Gastrocnemius medialis (tissue), 4 donors: ENCODE measurements at regions of chr4 and their contacts with region 1.

Region 1: GRCh38 chr4:51842554-51843308 is at the start of gene DCUN1D4:
- DNase-seq: peak; percentile 100
- ATAC-seq: peak; percentile 76 to 78
- H3K4me3 ChIP-seq: peak within 1 kb of the TSS; percentile 70 to 96 (median 80)
- H3K27ac ChIP-seq: peak within 1 kb of the TSS; percentile 91 to 98 (median 94)
- H3K4me1 ChIP-seq: peaks cover 15% of the 10 kb centered on the region in 2 donors
- H3K27me3 ChIP-seq: no peaks in the 10 kb centered on the region
- CTCF ChIP-seq: peak in 3 of 5 experiments; percentile 51 to 59 (median 59)
- POLR2A ChIP-seq: peak; percentile 89 to 91
- total RNA-seq, gene DCUN1D4: 13.6 to 23.7 (median 18.4) TPM

Region 2: DNA sequence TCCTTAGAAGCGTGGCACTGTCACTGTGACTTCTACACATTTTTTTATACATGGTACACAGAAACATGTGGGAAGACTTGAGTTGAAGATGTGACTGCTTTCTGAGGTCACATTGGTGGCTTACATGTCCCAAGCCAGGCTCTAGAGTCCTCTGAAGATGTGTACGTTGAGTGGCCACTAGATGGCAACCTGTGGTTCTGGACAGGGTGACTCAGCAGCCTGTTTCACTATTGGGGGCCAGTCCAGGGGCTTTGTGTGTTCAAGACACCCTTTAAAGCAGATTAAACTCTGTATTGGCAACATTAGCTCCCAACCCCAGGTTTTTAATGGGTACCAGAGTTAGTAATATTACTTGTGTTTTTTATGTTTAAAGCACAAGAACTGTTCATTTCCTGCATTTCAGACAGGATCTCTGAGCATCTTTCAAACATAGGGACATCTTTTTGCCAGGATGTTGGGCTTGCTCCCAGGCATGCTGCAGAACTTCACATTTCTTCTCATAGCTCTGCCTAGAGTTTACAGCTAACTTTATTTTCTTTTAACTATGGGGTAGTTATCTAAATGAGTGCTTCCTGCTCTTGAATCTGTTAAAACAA is 53.2 kb after region 1 on chr4:
- in situ Hi-C with region 1: no loop called
- intact Hi-C with region 1: loop called (anchors 1 kb)
- DNase-seq: peak; percentile 41 to 76
- ATAC-seq: peak; percentile 86 to 99
- H3K4me3 ChIP-seq: no peak overlapping the region
- H3K27ac ChIP-seq: peak overlapping the region; percentile 49 to 70 (median 62)
- H3K4me1 ChIP-seq: peaks cover 12 to 20% of the 10 kb centered on the region in 2 donors
- H3K27me3 ChIP-seq: no peaks in the 10 kb centered on the region
- CTCF ChIP-seq: peak; percentile 54 to 78 (median 72)
- POLR2A ChIP-seq: no peak

Region 3: GRCh38 chr4:52038103-52038912 is 195.6 kb after region 1 on chr4 and contains the start of gene SGCB:
- in situ Hi-C with region 1: loop called in 1 of 4 experiments (anchors 5 kb)
- intact Hi-C with region 1: loop called (anchors 5 kb)
- DNase-seq: peak; percentile 30 to 46
- ATAC-seq: peak; percentile 86 to 87
- H3K4me3 ChIP-seq: peak within 1 kb of the TSS; percentile 72 to 87 (median 78)
- H3K27ac ChIP-seq: peak within 1 kb of the TSS; percentile 85 to 90 (median 88)
- H3K4me1 ChIP-seq: peaks cover 27 to 39% of the 10 kb centered on the region in 2 donors
- H3K27me3 ChIP-seq: peaks cover 0 to 3% (median 0%) of the 10 kb centered on the region in 3 donors
- CTCF ChIP-seq: peak in 2 of 5 experiments; percentile 13 to 16
- POLR2A ChIP-seq: peak; percentile 63 to 73
- total RNA-seq, gene SGCB: 24.8 to 49.8 (median 39.8) TPM

Region 4: DNA sequence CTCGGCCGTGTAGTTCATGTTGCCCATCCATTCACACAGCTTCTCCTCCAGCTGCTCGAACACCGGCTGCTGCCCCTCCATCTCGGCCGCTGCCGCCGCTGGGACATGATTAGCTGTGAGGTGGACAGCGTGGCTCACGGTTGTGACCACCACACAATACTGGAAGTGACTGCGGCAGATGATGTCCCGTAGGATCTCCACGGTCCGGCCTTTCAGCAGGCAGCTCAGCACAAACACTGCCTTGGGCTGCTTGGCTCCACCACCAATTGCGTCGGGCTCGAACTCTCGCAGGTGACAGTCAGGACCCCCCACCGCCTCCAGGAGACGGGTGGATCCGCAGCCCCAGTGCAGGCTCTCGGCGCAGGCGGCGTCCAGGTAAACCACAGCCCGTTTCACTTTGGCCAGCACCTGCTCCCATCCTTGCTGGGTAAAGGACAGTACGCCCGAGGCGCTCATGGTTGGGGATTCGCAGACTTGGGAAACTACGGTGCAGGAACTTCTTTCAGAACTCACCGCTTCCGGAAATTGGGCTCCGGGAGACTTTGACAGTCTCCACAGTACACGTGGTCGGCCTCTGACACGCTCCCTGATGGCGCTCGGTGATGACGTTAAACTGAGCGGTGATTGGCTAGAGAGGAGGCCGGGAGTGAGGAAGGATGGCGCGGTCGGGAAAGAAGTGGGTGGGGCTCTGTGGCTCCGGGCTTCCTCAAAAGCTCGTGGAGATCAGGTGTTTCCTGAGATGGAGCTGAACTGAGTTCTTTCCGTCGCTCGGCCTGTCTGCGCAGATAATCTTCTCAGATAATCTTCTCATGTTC is 1523.0 kb after region 1 on chr4 and contains the start of gene SCFD2:
- in situ Hi-C with region 1: no loop called
- intact Hi-C with region 1: loop called (anchors 10 kb)
- DNase-seq: peak; percentile 96
- ATAC-seq: peak; percentile 100
- H3K4me3 ChIP-seq: peak within 1 kb of the TSS; percentile 64 to 98 (median 88)
- H3K27ac ChIP-seq: peak within 1 kb of the TSS; percentile 56 to 78 (median 68)
- H3K4me1 ChIP-seq: peaks cover 16 to 23% of the 10 kb centered on the region in 2 donors
- H3K27me3 ChIP-seq: peaks cover 2 to 13% (median 5%) of the 10 kb centered on the region in 3 donors
- CTCF ChIP-seq: no peak
- POLR2A ChIP-seq: peak; percentile 22 to 51
- total RNA-seq, gene SCFD2: 8.9 to 16.0 (median 14.8) TPM